Cardiac septum (tissue), 1 donor: ENCODE measurements at regions of chr17 and their contacts with region 1.

Region 1: GRCh38 chr17:66727639-66728570 is 107.0 kb upstream of the CACNG5 start:
- DNase-seq: no peak

Region 2: GRCh38 chr17:66906321-66907278 is 178.7 kb after region 1 on chr17:
- intact Hi-C with region 1: loop called (anchors 2 kb)
- DNase-seq: peak; percentile 79